ENCODE measurements at regions of chr17 and their contacts with region 1.

Region 1: GRCh38 chr17:36948717-36949460 is at the start of gene AATF:
- DNase-seq: peak; percentile 97 to 98
- ATAC-seq: peak; percentile 99 to 100 (median 100)
- H3K4me3 ChIP-seq: peak within 1 kb of the TSS; percentile 74
- H3K27ac ChIP-seq: peak within 1 kb of the TSS; percentile 90
- H3K4me1 ChIP-seq: peaks cover 21% of the 10 kb centered on the region
- H3K27me3 ChIP-seq: peaks cover 5 to 41% (median 15%) of the 10 kb centered on the region in 3 donors
- CTCF ChIP-seq: no peak
- total RNA-seq, gene AATF: 23.5 to 40.6 (median 36.6) TPM

Region 2: GRCh38 chr17:36777118-36777517 is 171.8 kb before region 1 on chr17:
- intact Hi-C with region 1: no loop called
- DNase-seq: no peak
- ATAC-seq: no peak
- H3K4me3 ChIP-seq: no peak overlapping the region
- H3K27ac ChIP-seq: no peak overlapping the region
- H3K4me1 ChIP-seq: no peaks in the 10 kb centered on the region
- H3K27me3 ChIP-seq: peaks cover 0 to 19% (median 3%) of the 10 kb centered on the region in 3 donors
- CTCF ChIP-seq: no peak

Region 3: GRCh38 chr17:37047631-37048104 is 98.8 kb after region 1 on chr17:
- intact Hi-C with region 1: loop called in 1 of 2 experiments (anchors 10 kb)
- DNase-seq: peak; percentile 75 to 85
- ATAC-seq: peak; percentile 83 to 96 (median 92)
- H3K4me3 ChIP-seq: no peak overlapping the region
- H3K27ac ChIP-seq: no peak overlapping the region
- H3K4me1 ChIP-seq: no peaks in the 10 kb centered on the region
- H3K27me3 ChIP-seq: no peaks in the 10 kb centered on the region
- CTCF ChIP-seq: peak; percentile 86